ENCODE measurements at regions of chr3 and their contacts with region 1.

Region 1: GRCh38 chr3:98022978-98023820 is 11.9 kb downstream of the GABRR3 start:
- DNase-seq: peak; percentile 75 to 88
- H3K4me3 ChIP-seq: no peak overlapping the region
- H3K27ac ChIP-seq: no peak overlapping the region
- H3K4me1 ChIP-seq: peaks cover 6% of the 10 kb centered on the region; the same call in 1 of the 2 replicates
- H3K27me3 ChIP-seq: no peaks in the 10 kb centered on the region
- CTCF ChIP-seq: peak; percentile 100

Region 2: DNA sequence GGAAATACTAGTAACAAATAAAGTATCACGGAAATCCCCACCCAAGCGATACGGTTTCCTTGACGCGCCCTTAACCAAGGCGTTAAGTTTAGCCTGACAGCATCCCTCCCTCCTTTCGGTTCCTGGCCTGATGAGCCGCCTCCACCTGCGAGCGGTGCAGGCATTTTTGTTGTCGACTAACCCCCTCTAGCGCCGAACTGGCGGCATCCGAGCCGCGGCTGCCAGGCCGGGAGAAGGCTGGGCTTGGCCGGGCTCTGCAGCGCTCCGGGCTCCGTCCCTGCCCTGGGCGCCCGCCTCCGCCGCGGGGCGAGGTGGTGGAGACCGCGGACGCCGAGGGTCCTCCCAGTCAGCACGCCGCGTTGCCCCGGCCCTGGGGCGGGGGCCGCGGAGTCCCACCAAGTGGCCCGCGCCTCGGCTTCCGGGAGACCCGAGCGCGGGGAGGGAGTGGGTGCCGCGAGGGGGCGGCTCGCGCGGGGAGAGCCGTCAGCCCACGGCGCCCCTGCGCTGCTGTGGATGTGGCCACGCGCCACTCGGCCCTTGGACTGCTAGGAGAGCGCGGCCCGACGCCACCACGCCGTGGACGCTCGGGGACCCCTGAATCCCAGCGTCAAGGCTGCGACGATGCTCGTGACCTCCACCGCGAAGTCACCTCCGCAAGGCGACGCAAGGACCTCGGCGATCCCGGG is 1209.9 kb before region 1 on chr3:
- CTCF ChIA-PET with region 1: no interaction called
- POLR2A ChIA-PET with region 1: no interaction called
- intact Hi-C with region 1: loop called (anchors 1 kb)
- DNase-seq: peak; percentile 70 to 87
- H3K4me3 ChIP-seq: peak overlapping the region; percentile 62
- H3K27ac ChIP-seq: no peak overlapping the region
- H3K4me1 ChIP-seq: peaks cover 16% of the 10 kb centered on the region
- H3K27me3 ChIP-seq: peaks cover 32% of the 10 kb centered on the region
- CTCF ChIP-seq: peak; percentile 83

Region 3: DNA sequence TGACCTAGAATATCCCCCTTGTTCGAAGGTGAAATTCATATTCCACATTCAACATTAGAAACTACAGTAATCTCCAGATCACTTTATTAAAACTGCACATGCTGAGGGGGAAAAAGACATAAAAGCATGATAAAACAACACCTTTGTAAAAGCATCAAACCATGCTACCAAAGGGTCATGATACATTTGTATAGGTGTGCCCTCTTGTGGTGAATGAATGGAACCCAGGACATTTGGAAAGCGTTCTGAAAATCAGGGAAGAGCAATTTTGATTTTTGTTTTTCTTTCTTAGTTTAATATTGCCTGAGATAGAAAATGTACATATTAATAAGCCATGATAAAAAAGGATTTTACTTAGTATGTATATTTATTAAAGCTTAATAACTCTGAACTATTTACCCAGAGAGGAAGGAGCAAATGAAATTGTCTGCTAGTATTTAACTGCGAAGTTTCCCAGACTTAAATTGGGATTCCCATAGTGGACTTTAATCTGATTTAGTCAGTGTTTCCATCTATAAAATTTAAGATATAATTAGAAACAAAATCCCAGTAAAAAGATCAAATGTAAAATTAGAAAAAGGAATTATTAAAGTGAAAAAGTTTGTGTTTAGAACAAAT is 364.4 kb before region 1 on chr3:
- CTCF ChIA-PET with region 1: no interaction called
- POLR2A ChIA-PET with region 1: no interaction called
- intact Hi-C with region 1: loop called (anchors 2 kb)
- DNase-seq: no peak
- H3K4me3 ChIP-seq: no peak overlapping the region
- H3K27ac ChIP-seq: no peak overlapping the region
- H3K4me1 ChIP-seq: no peaks in the 10 kb centered on the region
- H3K27me3 ChIP-seq: no peaks in the 10 kb centered on the region
- CTCF ChIP-seq: peak; percentile 90

Region 4: DNA sequence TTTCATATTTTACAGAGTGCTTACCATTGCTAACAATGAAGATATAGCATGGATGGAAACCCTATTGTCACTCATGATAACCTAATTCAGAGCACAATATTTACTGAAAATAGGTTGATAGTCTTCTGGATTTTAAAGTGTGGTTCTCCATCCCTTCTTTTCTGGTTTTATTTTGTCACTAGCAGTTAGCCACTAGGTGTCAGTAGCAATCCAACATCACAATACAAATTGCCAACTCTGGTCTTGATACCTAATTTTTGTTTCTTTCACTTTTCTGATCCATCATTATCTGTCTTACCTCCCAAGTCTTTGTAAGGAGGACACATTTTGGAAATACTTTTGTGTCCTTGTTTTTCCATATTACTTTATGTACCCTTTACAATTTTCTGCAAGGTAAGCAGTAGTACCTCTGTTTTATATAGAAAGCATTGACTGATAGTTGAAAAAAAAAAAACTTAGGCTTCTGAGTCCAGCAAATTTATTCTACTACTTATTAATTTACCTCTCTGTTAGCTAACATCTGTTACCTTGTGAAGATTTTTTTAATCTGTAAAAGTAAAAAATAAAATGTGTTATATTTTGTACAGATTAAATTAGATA is 229.7 kb before region 1 on chr3:
- CTCF ChIA-PET with region 1: interaction called, 5 read pairs
- POLR2A ChIA-PET with region 1: no interaction called
- intact Hi-C with region 1: loop called (anchors 1 kb)
- DNase-seq: peak in 1 of 2 experiments; percentile 59
- H3K4me3 ChIP-seq: no peak overlapping the region
- H3K27ac ChIP-seq: no peak overlapping the region
- H3K4me1 ChIP-seq: no peaks in the 10 kb centered on the region
- H3K27me3 ChIP-seq: no peaks in the 10 kb centered on the region
- CTCF ChIP-seq: peak; percentile 97

Region 5: GRCh38 chr3:97882975-97883598 is 140.1 kb before region 1 on chr3:
- CTCF ChIA-PET with region 1: no interaction called
- POLR2A ChIA-PET with region 1: no interaction called
- intact Hi-C with region 1: loop called (anchors 5 kb)
- DNase-seq: peak; percentile 74 to 91
- H3K4me3 ChIP-seq: peak overlapping the region; percentile 20; the same call in 1 of the 2 replicates
- H3K27ac ChIP-seq: peak overlapping the region; percentile 64
- H3K4me1 ChIP-seq: peaks cover 24% of the 10 kb centered on the region
- H3K27me3 ChIP-seq: no peaks in the 10 kb centered on the region
- CTCF ChIP-seq: no peak

Region 6: DNA sequence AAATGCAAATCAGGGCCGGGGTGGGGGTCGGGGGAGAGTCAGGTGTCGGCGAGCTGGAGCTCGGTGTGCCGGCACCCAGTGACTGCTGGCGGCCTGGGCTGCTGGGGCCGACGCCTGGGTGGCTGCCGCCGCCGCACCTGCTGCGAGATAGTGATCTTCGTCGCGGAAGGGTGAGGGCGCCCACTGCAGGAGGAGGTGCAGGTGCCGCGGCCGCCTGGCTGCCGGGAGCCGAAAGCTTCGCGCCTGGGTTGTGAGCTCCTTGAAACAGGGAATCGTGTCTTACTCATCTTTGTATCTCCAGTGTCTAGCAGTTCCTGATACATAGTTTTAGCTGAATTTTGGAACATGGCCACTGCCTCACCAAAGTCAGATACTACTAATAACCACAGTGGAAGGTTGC is 634.3 kb after region 1 on chr3:
- CTCF ChIA-PET with region 1: no interaction called
- POLR2A ChIA-PET with region 1: no interaction called
- intact Hi-C with region 1: no loop called
- DNase-seq: peak in 1 of 2 experiments; percentile 26
- H3K4me3 ChIP-seq: no peak overlapping the region; the same call in 1 of the 2 replicates
- H3K27ac ChIP-seq: no peak overlapping the region
- H3K4me1 ChIP-seq: no peaks in the 10 kb centered on the region
- H3K27me3 ChIP-seq: no peaks in the 10 kb centered on the region
- CTCF ChIP-seq: no peak; the same call in 1 of the 2 replicates

Measured in PC-9 (cell line).